ENCODE measurements at regions of chr18 and their contacts with region 1.

Region 1: GRCh38 chr18:53441761-53442414 is 782.6 kb downstream of the MBD2 start:
- DNase-seq: no peak
- H3K4me3 ChIP-seq: no peak overlapping the region
- H3K27ac ChIP-seq: no peak overlapping the region
- H3K4me1 ChIP-seq: no peaks in the 10 kb centered on the region
- H3K27me3 ChIP-seq: no peaks in the 10 kb centered on the region
- CTCF ChIP-seq: no peak

Region 2: GRCh38 chr18:53241161-53241560 is 200.7 kb before region 1 on chr18:
- intact Hi-C with region 1: no loop called
- DNase-seq: no peak
- H3K4me3 ChIP-seq: no peak overlapping the region
- H3K27ac ChIP-seq: no peak overlapping the region
- H3K4me1 ChIP-seq: no peaks in the 10 kb centered on the region
- H3K27me3 ChIP-seq: no peaks in the 10 kb centered on the region
- CTCF ChIP-seq: no peak

Region 3: GRCh38 chr18:54360406-54360805 is 918.5 kb after region 1 on chr18:
- intact Hi-C with region 1: loop called (anchors 5 kb)
- DNase-seq: no peak
- H3K4me3 ChIP-seq: no peak overlapping the region
- H3K27ac ChIP-seq: no peak overlapping the region
- H3K4me1 ChIP-seq: peaks cover 0 to 6% (median 1%) of the 10 kb centered on the region in 4 donors
- H3K27me3 ChIP-seq: no peaks in the 10 kb centered on the region
- CTCF ChIP-seq: no peak